ENCODE measurements at regions of chrX and their contacts with region 1.

Region 1: DNA sequence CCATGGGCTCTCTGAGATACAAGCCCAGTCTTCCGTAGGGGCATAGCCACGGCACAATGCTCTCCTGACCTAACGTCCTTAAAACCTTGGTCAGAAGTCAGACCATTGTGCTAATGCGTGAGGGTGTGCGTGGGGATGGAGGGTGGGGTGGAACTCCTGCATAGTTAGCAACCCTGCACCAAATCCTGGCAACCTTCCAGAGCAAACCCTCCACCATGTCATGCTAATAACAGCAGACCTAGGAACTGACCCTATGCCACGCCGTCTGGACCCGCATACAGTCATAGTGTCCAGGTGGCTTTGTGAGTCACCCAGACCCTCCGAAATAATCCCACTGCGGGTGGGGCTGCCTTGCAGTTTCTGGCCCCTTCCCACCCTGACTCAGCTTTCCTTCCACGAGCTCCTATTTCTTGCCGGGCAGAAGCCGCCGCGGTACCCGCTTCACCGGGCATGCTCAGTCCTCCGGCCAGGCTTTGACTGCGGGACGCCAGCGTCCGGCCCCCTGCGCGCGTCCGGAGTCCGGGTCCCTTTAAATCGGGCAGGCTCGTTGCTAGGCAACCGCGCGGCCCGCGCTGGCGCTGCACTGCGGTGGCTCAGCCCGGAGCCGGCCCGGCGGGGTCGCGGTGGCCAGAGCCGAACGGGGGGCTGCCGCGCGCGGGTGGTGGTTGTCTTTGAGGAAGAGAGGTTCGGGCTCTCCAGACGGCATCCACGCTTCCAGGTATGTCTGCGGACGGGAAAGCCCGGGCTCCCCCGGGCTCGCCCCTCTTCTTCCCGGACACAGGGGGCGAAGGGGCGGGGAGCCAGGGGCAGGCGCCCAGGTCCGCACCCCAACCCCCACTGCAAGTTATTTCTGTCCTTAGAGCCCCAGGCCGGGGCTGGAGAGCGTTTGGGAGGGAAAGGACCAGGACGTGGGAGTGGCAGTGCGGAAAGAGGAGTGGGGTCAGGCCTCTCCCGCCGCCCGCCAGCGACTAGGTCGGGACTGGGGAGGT is at the start of gene CCDC160:
- DNase-seq: peak; percentile 38 to 93 (median 62)

Region 2: DNA sequence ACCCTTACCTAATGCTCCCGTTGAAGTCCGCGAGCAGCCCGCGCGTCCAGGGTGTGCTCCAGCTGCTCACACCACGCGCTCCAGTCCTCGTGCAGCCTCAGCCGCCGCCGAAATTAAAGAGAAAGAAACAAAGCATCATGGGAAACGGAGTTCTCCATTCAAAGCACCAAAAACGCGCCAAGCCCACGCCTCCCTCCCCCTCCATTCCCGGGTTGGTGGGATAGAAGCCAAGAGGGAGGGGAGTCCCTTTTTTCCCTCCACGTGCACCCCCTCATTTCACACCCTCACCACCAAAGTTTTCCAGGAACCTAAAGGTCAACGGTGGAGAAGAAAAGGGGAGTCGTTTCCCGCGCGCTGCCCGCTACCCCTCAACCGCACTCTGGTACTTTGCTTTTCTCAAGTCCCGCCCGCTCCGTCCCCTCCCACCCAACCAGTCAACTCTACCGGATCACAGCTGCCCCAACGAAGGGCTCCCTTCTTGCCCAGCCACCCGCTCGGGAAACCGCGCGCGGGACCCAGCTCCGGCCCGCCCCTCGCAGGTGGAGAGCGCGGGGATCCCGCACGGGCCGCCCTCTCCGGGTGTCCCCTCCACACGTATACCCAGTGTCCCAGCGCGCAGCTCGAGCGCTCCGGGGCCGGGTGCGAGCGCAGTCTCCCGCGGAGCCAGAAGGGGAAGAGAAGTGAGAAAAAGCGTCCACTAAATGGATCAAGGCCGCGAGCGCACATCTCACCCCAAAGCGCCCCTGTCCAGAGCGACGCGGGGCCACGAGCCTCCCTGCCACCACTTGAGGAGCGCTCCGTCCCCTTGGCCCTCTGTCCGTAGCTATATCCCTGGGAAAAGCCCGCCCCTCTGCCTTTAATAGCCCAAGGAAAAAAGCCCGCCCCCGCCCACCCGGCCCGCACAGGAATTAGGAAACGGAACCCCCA is 65.0 kb before region 1 on chrX:
- intact Hi-C with region 1: loop called (anchors 10 kb)
- DNase-seq: peak in 4 of 10 donors; percentile 13 to 80 (median 50)